Prostate gland (tissue), 2 donors: ENCODE measurements at regions of chr12 and their contacts with region 1.

Region 1: DNA sequence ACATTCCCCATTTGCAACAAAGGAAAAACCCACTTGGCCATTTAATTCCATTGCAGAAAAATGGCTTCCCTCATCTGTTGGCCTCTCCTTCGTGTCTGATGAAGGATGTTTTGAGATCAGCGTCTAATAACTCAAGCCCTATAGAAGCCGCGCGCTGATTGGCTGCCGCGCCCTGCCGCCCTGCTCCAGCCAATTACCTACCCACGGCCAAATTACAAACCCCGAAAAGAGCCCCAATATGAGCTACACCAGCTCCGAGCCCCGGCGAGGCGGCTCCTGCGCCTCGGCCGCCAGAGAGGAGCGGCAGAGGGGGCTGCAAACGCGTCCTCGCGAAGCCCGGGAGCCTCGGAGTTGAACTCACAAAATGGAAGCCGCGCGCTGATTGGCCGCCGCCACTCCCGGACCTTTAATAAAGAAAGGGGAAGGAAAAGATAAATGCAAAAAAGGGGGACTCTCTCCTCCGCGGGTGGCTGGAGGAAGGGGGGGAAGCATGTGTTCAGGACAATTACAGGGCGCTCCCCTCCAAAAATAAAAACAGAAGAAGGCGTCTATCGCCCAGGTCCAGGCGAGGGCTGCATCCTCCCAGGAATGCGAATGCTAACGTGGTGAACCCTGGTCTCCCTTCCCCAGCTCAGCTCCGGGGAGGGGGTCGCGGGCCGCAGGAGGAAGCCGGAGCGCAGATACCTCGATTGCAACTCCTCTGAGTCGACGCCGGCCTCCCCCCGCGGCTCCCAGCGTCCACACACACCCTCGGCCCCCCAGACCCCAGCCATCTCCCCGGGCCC is 771 bp upstream of the SETD1B start:
- DNase-seq: peak; percentile 94
- H3K4me3 ChIP-seq: peak overlapping the region; percentile 59 to 84
- H3K27ac ChIP-seq: peak overlapping the region; percentile 98 to 100
- H3K4me1 ChIP-seq: peaks cover 20% of the 10 kb centered on the region
- H3K27me3 ChIP-seq: no peaks in the 10 kb centered on the region
- CTCF ChIP-seq: no peak
- POLR2A ChIP-seq: peak; percentile 94

Region 2: GRCh38 chr12:121579981-121580868 is 222.8 kb before region 1 on chr12:
- intact Hi-C with region 1: loop called (anchors 10 kb)
- DNase-seq: peak; percentile 72
- H3K4me3 ChIP-seq: peak overlapping the region; percentile 53 to 55
- H3K27ac ChIP-seq: peak overlapping the region; percentile 75 to 78
- H3K4me1 ChIP-seq: no peaks in the 10 kb centered on the region
- H3K27me3 ChIP-seq: no peaks in the 10 kb centered on the region
- CTCF ChIP-seq: no peak
- POLR2A ChIP-seq: no peak

Region 3: GRCh38 chr12:121638298-121639174 is 164.5 kb before region 1 on chr12:
- intact Hi-C with region 1: no loop called
- DNase-seq: no peak
- H3K4me3 ChIP-seq: no peak overlapping the region
- H3K27ac ChIP-seq: no peak overlapping the region
- H3K4me1 ChIP-seq: no peaks in the 10 kb centered on the region
- H3K27me3 ChIP-seq: no peaks in the 10 kb centered on the region
- CTCF ChIP-seq: no peak
- POLR2A ChIP-seq: no peak

Region 4: GRCh38 chr12:121888478-121889266 is 85.6 kb after region 1 on chr12 and contains the start of gene PSMD9:
- intact Hi-C with region 1: loop called (anchors 2 kb)
- DNase-seq: peak; percentile 95
- H3K4me3 ChIP-seq: peak within 1 kb of the TSS; percentile 68 to 82
- H3K27ac ChIP-seq: peak within 1 kb of the TSS; percentile 94 to 95
- H3K4me1 ChIP-seq: peaks cover 11% of the 10 kb centered on the region
- H3K27me3 ChIP-seq: no peaks in the 10 kb centered on the region
- CTCF ChIP-seq: peak; percentile 43 to 78 (median 59)
- POLR2A ChIP-seq: peak; percentile 75
- total RNA-seq, gene PSMD9: 68.2 to 73.3 TPM